Activated B cell treated with CpG ODN at 0.5 μM for 24 hours (primary cell): ENCODE measurements at regions of chr7 and their contacts with region 1.

Region 1: GRCh38 chr7:134432296-134433152 is 26.4 kb downstream of the AKR1B1 start:
- DNase-seq: peak; percentile 56
- ATAC-seq: peak; percentile 89
- H3K4me3 Mint-ChIP-seq: peak overlapping the region; percentile 82
- H3K27ac Mint-ChIP-seq: peak overlapping the region; percentile 82
- H3K4me1 Mint-ChIP-seq: peaks cover 20% of the 10 kb centered on the region
- H3K27me3 Mint-ChIP-seq: no peaks in the 10 kb centered on the region
- CTCF ChIP-seq: no peak

Region 2: GRCh38 chr7:133165001-133165400 is 1267.5 kb before region 1 on chr7:
- CTCF ChIA-PET with region 1: no interaction called
- POLR2A ChIA-PET with region 1: no interaction called
- intact Hi-C with region 1: no loop called
- DNase-seq: no peak
- ATAC-seq: no peak
- H3K4me3 Mint-ChIP-seq: no peak overlapping the region
- H3K27ac Mint-ChIP-seq: no peak overlapping the region
- H3K4me1 Mint-ChIP-seq: no peaks in the 10 kb centered on the region
- H3K27me3 Mint-ChIP-seq: peaks cover 22% of the 10 kb centered on the region
- CTCF ChIP-seq: no peak

Region 3: DNA sequence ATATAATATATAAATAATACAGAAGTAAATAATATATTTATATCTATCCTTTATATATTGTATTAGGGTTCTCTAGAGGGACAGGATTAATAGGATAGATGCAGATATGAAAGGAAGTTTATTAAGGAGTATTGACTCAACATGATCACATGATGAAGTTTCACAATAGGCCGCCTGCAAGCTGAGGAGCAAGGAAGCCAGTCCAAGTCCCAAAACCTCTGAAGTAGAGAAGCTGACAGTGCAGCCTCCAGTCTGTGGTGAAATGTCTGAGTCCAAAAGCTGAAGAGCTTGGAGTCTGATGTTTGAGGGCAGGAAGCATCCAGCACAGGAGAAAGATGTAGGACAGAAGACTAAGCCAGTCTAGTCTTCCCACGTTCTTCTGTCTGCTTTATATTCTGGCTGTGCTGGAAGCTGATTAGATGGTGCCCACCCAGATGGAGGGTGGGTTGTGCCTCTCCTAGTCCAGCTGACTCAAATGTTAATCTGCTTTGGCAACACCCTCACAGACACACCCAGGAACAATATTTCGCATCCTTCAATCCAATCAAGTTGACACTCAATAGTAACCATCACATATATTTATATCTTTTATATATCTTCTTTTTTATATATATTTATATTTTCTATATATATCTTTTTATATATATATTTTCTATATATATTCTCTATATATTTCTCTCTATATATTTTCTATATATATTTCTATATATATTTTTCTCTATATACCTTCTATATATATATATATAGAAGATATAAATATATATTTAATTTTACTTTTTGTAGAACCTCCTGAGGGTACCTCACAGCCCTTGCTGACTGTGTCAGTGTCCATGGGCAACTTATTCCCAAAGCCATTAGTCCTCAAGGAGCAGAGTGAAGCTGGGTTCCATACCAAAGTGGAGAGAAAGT is 70.2 kb after region 1 on chr7:
- CTCF ChIA-PET with region 1: no interaction called
- POLR2A ChIA-PET with region 1: no interaction called
- intact Hi-C with region 1: no loop called
- DNase-seq: no peak
- ATAC-seq: no peak
- H3K4me3 Mint-ChIP-seq: no peak overlapping the region
- H3K27ac Mint-ChIP-seq: no peak overlapping the region
- H3K4me1 Mint-ChIP-seq: no peaks in the 10 kb centered on the region
- H3K27me3 Mint-ChIP-seq: peaks cover 7% of the 10 kb centered on the region
- CTCF ChIP-seq: no peak

Region 4: DNA sequence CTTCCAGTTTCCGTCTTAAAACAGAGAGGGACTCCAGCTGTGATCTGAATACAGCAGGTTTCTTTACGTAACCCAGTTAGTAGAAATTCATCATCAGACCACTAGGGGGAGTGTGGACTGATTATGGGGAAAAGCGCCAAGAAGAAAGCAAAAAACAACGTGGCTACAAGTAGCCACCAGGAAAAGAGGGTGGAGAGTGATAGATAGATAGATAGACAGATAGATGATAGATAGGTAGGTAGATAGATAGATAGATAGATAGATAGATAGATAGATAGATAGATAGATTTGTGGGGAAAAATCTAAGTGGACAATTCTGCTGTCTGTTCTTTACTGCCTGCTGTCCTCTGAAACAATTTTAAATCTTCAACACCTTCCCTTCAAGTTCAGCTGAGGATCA is 82.1 kb after region 1 on chr7:
- CTCF ChIA-PET with region 1: interaction called, 23 read pairs
- POLR2A ChIA-PET with region 1: interaction called, 5 read pairs
- intact Hi-C with region 1: loop called (anchors 1 kb)
- DNase-seq: no peak
- ATAC-seq: peak; percentile 72
- H3K4me3 Mint-ChIP-seq: no peak overlapping the region
- H3K27ac Mint-ChIP-seq: no peak overlapping the region
- H3K4me1 Mint-ChIP-seq: peaks cover 2% of the 10 kb centered on the region
- H3K27me3 Mint-ChIP-seq: peaks cover 6% of the 10 kb centered on the region
- CTCF ChIP-seq: peak; percentile 98

Region 5: GRCh38 chr7:134547397-134548054 is 115.0 kb after region 1 on chr7:
- CTCF ChIA-PET with region 1: interaction called, 60 read pairs
- POLR2A ChIA-PET with region 1: interaction called, 7 read pairs
- intact Hi-C with region 1: loop called (anchors 1 kb)
- DNase-seq: peak; percentile 42
- ATAC-seq: peak; percentile 78
- H3K4me3 Mint-ChIP-seq: peak overlapping the region; percentile 58
- H3K27ac Mint-ChIP-seq: no peak overlapping the region
- H3K4me1 Mint-ChIP-seq: peaks cover 11% of the 10 kb centered on the region
- H3K27me3 Mint-ChIP-seq: peaks cover 14% of the 10 kb centered on the region
- CTCF ChIP-seq: no peak

Region 6: DNA sequence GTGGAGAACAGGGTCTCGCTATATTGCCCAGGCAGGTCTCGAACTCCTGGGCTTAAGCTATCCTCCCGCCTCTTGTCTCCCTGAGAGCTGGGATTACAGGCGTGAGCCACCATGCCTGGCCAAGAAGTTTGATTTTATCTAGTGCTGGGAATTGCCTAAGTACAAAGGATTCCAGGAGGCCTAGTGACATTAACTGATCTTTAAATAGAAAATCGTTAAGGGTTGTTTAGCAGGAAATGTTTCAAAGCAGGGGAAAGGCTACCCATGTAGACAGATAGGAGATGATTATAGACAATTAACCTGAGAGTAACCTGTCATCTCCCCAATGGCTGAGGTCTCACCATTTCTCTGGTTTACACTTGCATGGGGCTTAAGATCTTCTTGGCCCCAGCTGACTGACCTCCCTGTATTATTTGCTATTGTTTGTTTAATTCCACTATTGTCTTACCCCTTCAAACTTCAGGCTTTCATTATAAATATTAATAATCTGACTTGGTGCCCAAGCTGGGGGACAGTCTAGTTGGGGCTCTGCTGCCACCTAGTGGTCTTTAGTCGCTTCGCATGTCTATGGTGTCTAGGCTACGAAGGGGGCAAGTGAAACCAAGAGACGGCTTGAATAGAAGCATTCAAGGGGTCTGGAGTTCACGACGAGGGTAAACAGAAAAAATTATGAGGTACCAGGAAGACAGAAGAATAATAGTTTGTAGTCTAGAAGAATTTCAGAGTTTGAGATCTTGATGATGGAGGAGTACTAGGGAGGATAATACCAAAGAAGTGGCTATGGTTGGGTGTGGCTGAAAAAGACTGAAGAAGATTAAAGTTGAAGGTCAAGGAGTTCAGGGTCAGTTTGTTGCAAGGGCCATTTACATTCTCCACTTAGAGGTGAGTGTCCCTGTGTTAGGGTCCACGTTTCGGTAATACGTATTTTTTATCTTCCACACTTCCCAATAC is 173.7 kb after region 1 on chr7:
- CTCF ChIA-PET with region 1: interaction called, 106 read pairs
- POLR2A ChIA-PET with region 1: no interaction called
- intact Hi-C with region 1: loop called (anchors 1 kb)
- DNase-seq: no peak
- ATAC-seq: peak; percentile 84
- H3K4me3 Mint-ChIP-seq: no peak overlapping the region
- H3K27ac Mint-ChIP-seq: no peak overlapping the region
- H3K4me1 Mint-ChIP-seq: peaks cover 2% of the 10 kb centered on the region
- H3K27me3 Mint-ChIP-seq: peaks cover 44% of the 10 kb centered on the region
- CTCF ChIP-seq: peak; percentile 78

Region 7: GRCh38 chr7:134766779-134767519 is 334.4 kb after region 1 on chr7:
- CTCF ChIA-PET with region 1: no interaction called
- POLR2A ChIA-PET with region 1: no interaction called
- intact Hi-C with region 1: loop called (anchors 10 kb)
- DNase-seq: peak; percentile 27
- ATAC-seq: peak; percentile 90
- H3K4me3 Mint-ChIP-seq: peak overlapping the region; percentile 55
- H3K27ac Mint-ChIP-seq: peak overlapping the region; percentile 89
- H3K4me1 Mint-ChIP-seq: peaks cover 33% of the 10 kb centered on the region
- H3K27me3 Mint-ChIP-seq: no peaks in the 10 kb centered on the region
- CTCF ChIP-seq: no peak

Region 8: GRCh38 chr7:135274495-135275268 is 842.2 kb after region 1 on chr7:
- CTCF ChIA-PET with region 1: interaction called, 3 read pairs
- POLR2A ChIA-PET with region 1: no interaction called
- intact Hi-C with region 1: loop called (anchors 10 kb)
- DNase-seq: peak; percentile 49
- ATAC-seq: peak; percentile 96
- H3K4me3 Mint-ChIP-seq: no peak overlapping the region
- H3K27ac Mint-ChIP-seq: no peak overlapping the region
- H3K4me1 Mint-ChIP-seq: peaks cover 2% of the 10 kb centered on the region
- H3K27me3 Mint-ChIP-seq: peaks cover 6% of the 10 kb centered on the region
- CTCF ChIP-seq: peak; percentile 88